CD4-positive, alpha-beta T cell (primary cell): ENCODE measurements at regions of chr20 and their contacts with region 1.

Region 1: GRCh38 chr20:32674362-32674789 is 635 bp upstream of the C20orf203 start:
- DNase-seq: peak; percentile 53 to 84 (median 71)
- ATAC-seq: peak; percentile 78
- H3K4me3 ChIP-seq: no peak overlapping the region
- H3K4me3 Mint-ChIP-seq: no peak overlapping the region
- H3K27ac ChIP-seq: no peak overlapping the region
- H3K27ac Mint-ChIP-seq: no peak overlapping the region
- H3K4me1 ChIP-seq: peaks cover 24% of the 10 kb centered on the region
- H3K4me1 Mint-ChIP-seq: peaks cover 21% of the 10 kb centered on the region
- H3K27me3 ChIP-seq: no peaks in the 10 kb centered on the region
- H3K27me3 Mint-ChIP-seq: no peaks in the 10 kb centered on the region
- CTCF ChIP-seq: peak; percentile 78

Region 2: DNA sequence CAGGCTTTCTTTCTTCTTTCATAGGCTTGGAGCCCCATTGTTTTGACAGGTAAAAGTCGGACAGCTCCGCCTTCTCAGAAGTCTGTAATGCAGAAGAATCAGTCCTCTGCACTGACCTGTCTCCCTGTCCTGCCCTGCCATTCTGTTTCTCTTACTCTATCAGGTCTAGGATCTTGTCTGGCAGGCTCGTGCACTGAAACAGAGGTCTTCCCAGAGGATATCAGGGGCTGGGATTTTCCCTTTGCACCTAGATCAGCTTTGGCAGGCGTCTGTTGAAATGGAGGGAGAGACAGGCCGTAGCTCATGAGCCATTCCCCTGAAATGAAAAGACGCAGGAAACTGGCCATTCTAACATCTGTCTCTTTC is 371.9 kb before region 1 on chr20:
- CTCF ChIA-PET with region 1: no interaction called
- POLR2A ChIA-PET with region 1: no interaction called
- intact Hi-C with region 1: no loop called
- DNase-seq: no peak
- ATAC-seq: no peak
- H3K4me3 ChIP-seq: no peak overlapping the region
- H3K4me3 Mint-ChIP-seq: no peak overlapping the region
- H3K27ac ChIP-seq: no peak overlapping the region
- H3K27ac Mint-ChIP-seq: no peak overlapping the region
- H3K4me1 ChIP-seq: no peaks in the 10 kb centered on the region
- H3K4me1 Mint-ChIP-seq: peaks cover 23% of the 10 kb centered on the region
- H3K27me3 ChIP-seq: no peaks in the 10 kb centered on the region
- H3K27me3 Mint-ChIP-seq: no peaks in the 10 kb centered on the region
- CTCF ChIP-seq: no peak

Region 3: GRCh38 chr20:32494483-32495216 is 179.7 kb before region 1 on chr20:
- CTCF ChIA-PET with region 1: no interaction called
- POLR2A ChIA-PET with region 1: no interaction called
- intact Hi-C with region 1: no loop called
- DNase-seq: no peak
- ATAC-seq: no peak
- H3K4me3 ChIP-seq: no peak overlapping the region
- H3K4me3 Mint-ChIP-seq: no peak overlapping the region
- H3K27ac ChIP-seq: no peak overlapping the region
- H3K27ac Mint-ChIP-seq: peak overlapping the region; percentile 70
- H3K4me1 ChIP-seq: peaks cover 30% of the 10 kb centered on the region
- H3K4me1 Mint-ChIP-seq: peaks cover 64% of the 10 kb centered on the region
- H3K27me3 ChIP-seq: no peaks in the 10 kb centered on the region
- H3K27me3 Mint-ChIP-seq: no peaks in the 10 kb centered on the region
- CTCF ChIP-seq: no peak

Region 4: GRCh38 chr20:32743237-32744112 is 69.1 kb after region 1 on chr20 and contains the start of gene COMMD7:
- CTCF ChIA-PET with region 1: no interaction called
- POLR2A ChIA-PET with region 1: interaction called, 3 read pairs
- intact Hi-C with region 1: loop called in 1 of 2 experiments (anchors 2 kb)
- DNase-seq: peak; percentile 45 to 83 (median 58)
- ATAC-seq: peak; percentile 75
- H3K4me3 ChIP-seq: peak within 1 kb of the TSS; percentile 88
- H3K4me3 Mint-ChIP-seq: peak within 1 kb of the TSS; percentile 94
- H3K27ac ChIP-seq: peak within 1 kb of the TSS; percentile 85 to 91
- H3K27ac Mint-ChIP-seq: peak within 1 kb of the TSS; percentile 96
- H3K4me1 ChIP-seq: peaks cover 38% of the 10 kb centered on the region
- H3K4me1 Mint-ChIP-seq: peaks cover 41% of the 10 kb centered on the region
- H3K27me3 ChIP-seq: no peaks in the 10 kb centered on the region
- H3K27me3 Mint-ChIP-seq: no peaks in the 10 kb centered on the region
- CTCF ChIP-seq: no peak
- total RNA-seq, gene COMMD7: 30.3 to 30.4 TPM

Region 5: GRCh38 chr20:33097001-33097400 is 422.6 kb after region 1 on chr20:
- CTCF ChIA-PET with region 1: no interaction called
- POLR2A ChIA-PET with region 1: no interaction called
- intact Hi-C with region 1: loop called (anchors 5 to 10 kb)
- DNase-seq: no peak
- ATAC-seq: no peak
- H3K4me3 ChIP-seq: no peak overlapping the region
- H3K4me3 Mint-ChIP-seq: no peak overlapping the region
- H3K27ac ChIP-seq: no peak overlapping the region
- H3K27ac Mint-ChIP-seq: no peak overlapping the region
- H3K4me1 ChIP-seq: peaks cover 6% of the 10 kb centered on the region
- H3K4me1 Mint-ChIP-seq: peaks cover 11% of the 10 kb centered on the region
- H3K27me3 ChIP-seq: no peaks in the 10 kb centered on the region
- H3K27me3 Mint-ChIP-seq: no peaks in the 10 kb centered on the region
- CTCF ChIP-seq: no peak

Region 6: DNA sequence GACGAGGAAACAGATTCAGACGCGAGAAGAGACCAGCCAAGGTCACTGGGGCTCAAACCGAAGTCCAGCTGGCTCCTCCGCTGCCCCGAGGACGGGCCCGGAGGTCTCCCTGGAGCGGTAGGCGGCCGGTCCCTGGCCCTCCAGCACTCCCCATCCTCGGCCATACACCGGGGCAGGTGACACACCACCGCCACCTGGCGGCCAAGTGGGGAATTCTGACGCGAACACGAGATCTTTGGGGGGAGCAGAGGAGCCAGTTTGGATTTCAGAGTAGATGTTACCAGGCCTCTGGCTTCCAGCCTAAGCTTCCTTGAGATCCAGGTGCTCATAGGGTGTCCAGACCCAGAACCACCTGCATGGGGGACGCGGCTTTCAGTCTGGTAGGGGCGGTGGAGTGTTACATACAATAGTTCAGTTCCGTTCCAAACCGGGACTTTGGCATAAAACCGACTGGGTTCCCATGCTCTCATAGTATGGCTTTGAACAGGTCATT is 624.8 kb after region 1 on chr20:
- CTCF ChIA-PET with region 1: no interaction called
- POLR2A ChIA-PET with region 1: no interaction called
- intact Hi-C with region 1: loop called (anchors 5 to 10 kb)
- DNase-seq: peak; percentile 49 to 84 (median 70)
- ATAC-seq: peak; percentile 79
- H3K4me3 ChIP-seq: no peak overlapping the region
- H3K4me3 Mint-ChIP-seq: no peak overlapping the region
- H3K27ac ChIP-seq: no peak overlapping the region
- H3K27ac Mint-ChIP-seq: no peak overlapping the region
- H3K4me1 ChIP-seq: peaks cover 6% of the 10 kb centered on the region
- H3K4me1 Mint-ChIP-seq: no peaks in the 10 kb centered on the region
- H3K27me3 ChIP-seq: no peaks in the 10 kb centered on the region
- H3K27me3 Mint-ChIP-seq: no peaks in the 10 kb centered on the region
- CTCF ChIP-seq: peak; percentile 87